Psoas muscle (tissue), 8 donors: ENCODE measurements at regions of chr13 and their contacts with region 1.

Region 1: GRCh38 chr13:79679334-79679733 is 198.4 kb downstream of the NDFIP2 start:
- DNase-seq: peak; percentile 57 to 69
- ATAC-seq: peak; percentile 66 to 91 (median 79)
- H3K4me3 ChIP-seq: no peak overlapping the region
- H3K27ac ChIP-seq: no peak overlapping the region
- H3K4me1 ChIP-seq: no peaks in the 10 kb centered on the region
- H3K27me3 ChIP-seq: no peaks in the 10 kb centered on the region
- CTCF ChIP-seq: peak; percentile 86

Region 2: DNA sequence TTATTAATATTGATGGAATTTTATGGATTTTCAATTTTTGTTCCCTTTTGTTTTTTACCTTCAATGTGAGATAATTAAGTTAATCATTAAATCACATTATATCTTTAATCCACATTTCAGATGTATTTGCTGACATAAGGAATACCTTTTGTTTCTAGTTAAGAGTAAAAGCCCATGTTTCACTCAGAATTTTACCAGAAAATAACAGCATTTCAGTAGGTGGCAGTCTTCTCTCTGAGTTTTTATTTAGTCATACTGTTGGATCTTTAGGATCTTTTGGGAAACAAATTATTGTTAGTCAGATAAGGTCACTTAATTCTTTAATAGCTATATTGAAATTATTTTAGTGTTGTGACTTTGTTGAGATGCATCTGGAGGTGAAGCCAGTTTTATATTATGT is 130.4 kb before region 1 on chr13:
- intact Hi-C with region 1: loop called in 1 of 2 experiments (anchors 5 kb)
- DNase-seq: no peak
- ATAC-seq: no peak
- H3K4me3 ChIP-seq: no peak overlapping the region
- H3K27ac ChIP-seq: no peak overlapping the region
- H3K4me1 ChIP-seq: no peaks in the 10 kb centered on the region
- H3K27me3 ChIP-seq: no peaks in the 10 kb centered on the region
- CTCF ChIP-seq: peak; percentile 8

Region 3: DNA sequence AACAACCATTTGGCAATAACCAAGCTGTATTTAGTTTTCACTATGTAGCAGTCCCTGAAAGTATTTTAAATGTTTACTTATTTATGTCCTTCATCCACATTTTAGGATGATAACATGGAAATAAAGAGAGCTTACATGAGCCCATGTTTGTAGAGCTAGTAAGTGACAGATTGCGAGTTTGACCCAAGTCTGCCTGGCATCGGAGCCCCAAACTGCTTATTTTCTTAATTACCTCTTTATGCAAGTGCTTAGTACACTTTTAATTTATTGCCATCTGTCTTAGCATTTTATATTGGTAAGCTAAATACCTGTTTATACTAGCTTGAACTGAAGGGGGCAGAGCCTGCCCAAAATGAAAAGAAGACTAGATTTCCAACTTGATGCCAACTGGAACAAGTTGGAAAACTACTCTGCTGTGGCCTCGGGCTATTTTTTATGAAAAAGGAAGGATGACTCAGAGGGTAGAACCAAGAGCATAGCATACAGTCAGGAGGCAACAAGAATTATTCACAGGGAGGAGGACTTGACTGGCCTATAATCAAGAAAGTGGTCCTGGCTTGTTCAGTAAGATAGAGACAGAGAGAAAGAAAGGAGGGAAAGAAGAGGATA is 48.2 kb before region 1 on chr13:
- intact Hi-C with region 1: loop called (anchors 5 kb)
- DNase-seq: no peak
- ATAC-seq: peak; percentile 92 to 97 (median 94)
- H3K4me3 ChIP-seq: no peak overlapping the region
- H3K27ac ChIP-seq: peak overlapping the region; percentile 53
- H3K4me1 ChIP-seq: peaks cover 9% of the 10 kb centered on the region
- H3K27me3 ChIP-seq: no peaks in the 10 kb centered on the region
- CTCF ChIP-seq: peak; percentile 59

Region 4: DNA sequence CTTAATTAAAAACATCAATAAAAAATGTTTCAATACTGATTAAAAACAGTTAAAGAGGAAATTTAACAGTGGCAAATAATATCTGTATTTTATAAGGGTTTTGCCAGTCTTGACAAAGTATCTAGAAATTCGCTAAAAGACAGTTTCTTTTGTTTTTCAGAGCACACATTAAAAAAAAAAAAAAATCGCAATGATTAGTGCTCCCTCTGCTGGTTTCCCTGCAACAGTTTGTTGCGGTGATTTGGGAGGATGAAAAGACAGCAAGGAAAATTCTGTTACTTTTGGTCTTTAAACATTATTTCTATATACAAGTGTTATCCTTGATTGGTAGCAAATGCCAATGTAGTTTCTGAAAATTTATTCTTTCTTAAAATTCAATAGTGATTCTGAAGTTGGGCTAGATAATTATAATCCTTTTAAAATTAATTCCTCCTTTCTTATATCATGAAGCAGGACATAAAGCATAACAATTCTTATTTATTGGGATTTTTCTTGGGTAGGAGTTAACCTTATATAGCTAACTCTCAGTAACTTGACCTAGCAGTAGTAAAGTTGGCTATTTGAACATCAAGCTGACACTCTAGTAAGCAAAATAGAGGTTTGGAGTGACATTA is 684.7 kb after region 1 on chr13:
- intact Hi-C with region 1: loop called (anchors 5 kb)
- DNase-seq: no peak
- ATAC-seq: peak in 1 of 4 donors; percentile 74
- H3K4me3 ChIP-seq: peak overlapping the region; percentile 46
- H3K27ac ChIP-seq: no peak overlapping the region
- H3K4me1 ChIP-seq: peaks cover 4% of the 10 kb centered on the region
- H3K27me3 ChIP-seq: no peaks in the 10 kb centered on the region
- CTCF ChIP-seq: peak; percentile 85